ENCODE measurements at regions of chr10 and their contacts with region 1.

Region 1: DNA sequence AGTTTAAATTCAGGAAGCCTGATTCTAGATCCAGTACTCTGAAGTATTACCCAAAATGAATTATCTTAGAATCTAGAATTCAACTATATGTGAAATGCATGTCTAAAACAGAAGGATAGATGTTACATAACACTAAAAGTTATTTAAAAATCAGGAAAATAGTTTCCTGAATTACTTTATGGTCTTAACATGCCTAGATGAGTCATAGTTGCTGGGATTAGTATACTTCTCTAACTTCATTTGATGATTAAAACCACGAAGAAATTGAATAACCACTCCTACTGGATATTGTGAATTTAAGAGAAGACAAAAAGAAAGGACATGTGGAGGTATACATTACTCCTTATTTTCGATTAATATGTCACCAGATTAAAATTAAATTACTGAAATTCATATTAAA is 65.5 kb downstream of the ATAD1 start:
- DNase-seq: no peak
- H3K4me3 ChIP-seq: no peak overlapping the region
- H3K27ac ChIP-seq: no peak overlapping the region
- H3K27me3 ChIP-seq: no peaks in the 10 kb centered on the region
- CTCF ChIP-seq: no peak

Region 2: DNA sequence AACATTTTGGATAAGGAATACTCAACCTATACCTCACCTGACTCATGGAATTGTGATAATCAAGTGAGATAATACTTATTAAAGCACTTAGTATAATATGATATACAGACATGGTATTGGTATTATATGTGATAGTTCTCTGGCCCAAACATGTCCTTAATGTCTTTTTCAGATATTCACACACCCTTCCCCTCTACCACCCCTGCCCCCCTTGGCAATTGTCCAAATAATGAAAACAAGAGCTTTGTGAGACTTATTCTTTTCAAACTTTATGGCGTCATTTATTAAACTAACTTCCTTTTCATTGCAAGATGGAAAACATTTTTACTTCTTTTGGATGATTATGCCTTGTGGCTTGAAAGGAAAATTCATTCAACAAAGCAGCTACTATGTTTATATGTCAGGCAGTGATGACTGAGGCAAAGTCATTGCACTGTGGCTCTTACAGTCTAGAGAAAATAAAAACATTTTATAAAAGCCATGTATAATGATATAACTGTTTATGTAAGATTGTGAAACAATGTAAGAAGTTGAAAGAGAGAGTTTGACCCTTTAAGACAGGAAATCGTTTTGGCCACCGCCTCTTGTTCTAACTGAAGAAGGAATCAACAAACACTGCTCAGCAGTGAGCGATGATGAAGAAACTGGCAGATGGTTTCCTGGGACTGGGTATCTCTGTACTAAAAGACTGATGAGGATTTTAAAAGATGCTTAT is 220.5 kb before region 1 on chr10:
- CTCF ChIA-PET with region 1: interaction called, 17 read pairs
- POLR2A ChIA-PET with region 1: no interaction called
- DNase-seq: no peak
- H3K4me3 ChIP-seq: no peak overlapping the region
- H3K27ac ChIP-seq: no peak overlapping the region
- H3K27me3 ChIP-seq: no peaks in the 10 kb centered on the region
- CTCF ChIP-seq: no peak

Region 3: GRCh38 chr10:88080213-88080612 is 327.6 kb after region 1 on chr10:
- CTCF ChIA-PET with region 1: no interaction called
- POLR2A ChIA-PET with region 1: no interaction called
- DNase-seq: no peak
- H3K4me3 ChIP-seq: no peak overlapping the region
- H3K27ac ChIP-seq: no peak overlapping the region
- H3K27me3 ChIP-seq: no peaks in the 10 kb centered on the region
- CTCF ChIP-seq: no peak

Region 4: GRCh38 chr10:88152720-88153119 is 400.2 kb after region 1 on chr10:
- CTCF ChIA-PET with region 1: no interaction called
- POLR2A ChIA-PET with region 1: no interaction called
- DNase-seq: peak; percentile 68
- H3K4me3 ChIP-seq: no peak overlapping the region
- H3K27ac ChIP-seq: peak overlapping the region; percentile 82
- H3K27me3 ChIP-seq: no peaks in the 10 kb centered on the region
- CTCF ChIP-seq: no peak

Measured in AG04450 (cell line).